WTC11 (cell line): ENCODE measurements at regions of chr1 and their contacts with region 1.

Region 1: GRCh38 chr1:27504588-27505419 is 14.8 kb upstream of the WASF2 start:
- DNase-seq: peak; percentile 58
- ATAC-seq: peak; percentile 83
- H3K4me3 Mint-ChIP-seq: no peak overlapping the region
- H3K27ac Mint-ChIP-seq: no peak overlapping the region
- H3K4me1 Mint-ChIP-seq: peaks cover 33% of the 10 kb centered on the region
- H3K27me3 Mint-ChIP-seq: no peaks in the 10 kb centered on the region
- CTCF ChIP-seq: no peak

Region 2: DNA sequence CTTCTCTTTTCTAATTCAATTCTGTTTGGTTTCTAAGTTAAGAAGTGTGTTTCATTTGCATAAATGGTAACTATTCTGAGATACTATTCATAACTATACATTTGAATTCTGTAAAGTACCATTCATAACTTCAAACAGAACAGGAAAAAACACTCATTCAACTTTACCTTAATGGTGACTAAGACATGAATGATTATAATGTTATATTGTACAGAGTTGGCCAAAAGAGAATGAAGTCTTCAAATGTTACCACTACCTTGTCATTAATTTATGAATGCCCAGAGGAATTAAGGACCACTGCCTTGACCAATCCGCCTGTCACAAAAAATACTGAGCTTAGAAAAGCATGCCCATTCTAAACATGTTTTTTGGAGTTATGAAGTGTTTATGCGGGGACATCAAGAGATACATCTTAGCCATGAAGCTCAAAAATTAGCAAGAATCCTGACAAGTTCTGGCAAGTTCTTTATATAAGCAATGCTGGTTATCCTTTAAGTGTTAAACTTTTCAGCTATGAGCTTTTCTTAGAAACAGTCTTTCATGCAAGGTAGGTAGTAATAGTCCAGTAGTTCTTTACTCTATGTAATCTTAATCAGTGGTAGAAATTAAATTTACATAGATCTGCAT is 22.7 kb before region 1 on chr1:
- CTCF ChIA-PET with region 1: no interaction called
- POLR2A ChIA-PET with region 1: no interaction called
- DNase-seq: no peak
- ATAC-seq: no peak
- H3K4me3 Mint-ChIP-seq: no peak overlapping the region
- H3K27ac Mint-ChIP-seq: peak overlapping the region; percentile 75
- H3K4me1 Mint-ChIP-seq: peaks cover 29% of the 10 kb centered on the region
- H3K27me3 Mint-ChIP-seq: no peaks in the 10 kb centered on the region
- CTCF ChIP-seq: no peak

Region 3: GRCh38 chr1:27525296-27526272 is 20.8 kb after region 1 on chr1:
- CTCF ChIA-PET with region 1: interaction called, 14 read pairs
- POLR2A ChIA-PET with region 1: no interaction called
- DNase-seq: peak; percentile 79
- ATAC-seq: peak; percentile 50
- H3K4me3 Mint-ChIP-seq: peak overlapping the region; percentile 55
- H3K27ac Mint-ChIP-seq: peak overlapping the region; percentile 85
- H3K4me1 Mint-ChIP-seq: peaks cover 70% of the 10 kb centered on the region
- H3K27me3 Mint-ChIP-seq: no peaks in the 10 kb centered on the region; the same call in 1 of the 2 replicates
- CTCF ChIP-seq: no peak